ENCODE measurements at regions of chr6 and their contacts with region 1.

Region 1: DNA sequence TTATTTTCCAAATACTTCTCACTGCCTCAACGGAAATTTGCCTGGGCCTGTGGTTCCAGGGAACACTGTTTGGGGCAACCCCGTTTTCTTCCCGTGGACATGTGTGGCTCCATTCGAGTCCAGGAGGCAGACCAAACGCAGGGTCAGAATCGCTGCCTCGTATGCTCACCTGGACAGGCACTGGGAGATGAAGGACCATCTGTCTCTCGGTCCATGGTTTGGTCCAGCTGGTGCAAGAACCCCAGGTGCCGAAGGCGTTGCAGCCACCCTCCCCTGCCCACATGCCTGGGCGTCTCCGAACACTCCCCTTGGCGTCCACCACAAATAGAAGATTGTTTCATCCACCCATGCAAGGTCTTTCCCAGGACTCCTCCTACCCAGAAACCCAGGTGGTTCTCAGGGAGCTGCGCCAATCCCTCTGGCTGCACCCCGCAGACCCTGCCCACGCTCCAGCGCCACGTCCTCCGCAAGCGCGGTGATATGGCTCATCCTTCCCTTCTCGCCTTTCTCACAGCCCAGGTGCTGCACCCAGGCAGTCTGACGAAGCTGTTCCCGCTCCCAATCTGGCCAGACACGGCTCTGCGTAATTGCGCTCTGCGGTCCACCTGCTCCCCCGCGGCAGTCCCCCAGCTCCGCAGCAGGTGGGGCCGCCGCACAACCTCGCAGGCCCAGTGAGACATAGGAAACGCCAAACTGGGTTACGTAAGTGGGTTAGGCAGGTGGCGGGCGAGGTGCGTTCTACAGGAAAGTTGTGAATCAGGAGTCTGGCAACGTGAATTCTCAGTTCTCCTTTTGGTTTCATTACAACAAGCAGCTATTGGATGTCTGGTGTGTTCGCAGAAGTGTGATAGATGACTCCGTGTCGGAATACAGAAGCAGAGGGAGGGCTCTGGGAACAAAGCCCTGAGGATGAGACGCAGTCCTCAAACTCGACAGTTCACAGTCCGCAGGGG is 146.2 kb upstream of the ECI2 start:
- DNase-seq: peak; percentile 60
- ATAC-seq: peak; percentile 97
- H3K4me3 Mint-ChIP-seq: peak overlapping the region; percentile 73
- H3K27ac Mint-ChIP-seq: peak overlapping the region; percentile 76
- H3K4me1 Mint-ChIP-seq: peaks cover 18% of the 10 kb centered on the region
- H3K27me3 Mint-ChIP-seq: peaks cover 26% of the 10 kb centered on the region
- CTCF ChIP-seq: no peak

Region 2: GRCh38 chr6:4153514-4153985 is 128.1 kb before region 1 on chr6:
- CTCF ChIA-PET with region 1: no interaction called
- POLR2A ChIA-PET with region 1: no interaction called
- intact Hi-C with region 1: no loop called
- DNase-seq: no peak
- ATAC-seq: peak; percentile 84
- H3K4me3 Mint-ChIP-seq: peak overlapping the region; percentile 74
- H3K27ac Mint-ChIP-seq: peak overlapping the region; percentile 91
- H3K4me1 Mint-ChIP-seq: peaks cover 34% of the 10 kb centered on the region
- H3K27me3 Mint-ChIP-seq: peaks cover 15% of the 10 kb centered on the region
- CTCF ChIP-seq: no peak

Region 3: GRCh38 chr6:4336778-4337442 is 55.3 kb after region 1 on chr6:
- CTCF ChIA-PET with region 1: no interaction called
- POLR2A ChIA-PET with region 1: interaction called, 3 read pairs
- intact Hi-C with region 1: loop called (anchors 5 kb)
- DNase-seq: no peak
- ATAC-seq: peak; percentile 66
- H3K4me3 Mint-ChIP-seq: no peak overlapping the region
- H3K27ac Mint-ChIP-seq: peak overlapping the region; percentile 30
- H3K4me1 Mint-ChIP-seq: peaks cover 17% of the 10 kb centered on the region
- H3K27me3 Mint-ChIP-seq: no peaks in the 10 kb centered on the region
- CTCF ChIP-seq: no peak

Region 4: DNA sequence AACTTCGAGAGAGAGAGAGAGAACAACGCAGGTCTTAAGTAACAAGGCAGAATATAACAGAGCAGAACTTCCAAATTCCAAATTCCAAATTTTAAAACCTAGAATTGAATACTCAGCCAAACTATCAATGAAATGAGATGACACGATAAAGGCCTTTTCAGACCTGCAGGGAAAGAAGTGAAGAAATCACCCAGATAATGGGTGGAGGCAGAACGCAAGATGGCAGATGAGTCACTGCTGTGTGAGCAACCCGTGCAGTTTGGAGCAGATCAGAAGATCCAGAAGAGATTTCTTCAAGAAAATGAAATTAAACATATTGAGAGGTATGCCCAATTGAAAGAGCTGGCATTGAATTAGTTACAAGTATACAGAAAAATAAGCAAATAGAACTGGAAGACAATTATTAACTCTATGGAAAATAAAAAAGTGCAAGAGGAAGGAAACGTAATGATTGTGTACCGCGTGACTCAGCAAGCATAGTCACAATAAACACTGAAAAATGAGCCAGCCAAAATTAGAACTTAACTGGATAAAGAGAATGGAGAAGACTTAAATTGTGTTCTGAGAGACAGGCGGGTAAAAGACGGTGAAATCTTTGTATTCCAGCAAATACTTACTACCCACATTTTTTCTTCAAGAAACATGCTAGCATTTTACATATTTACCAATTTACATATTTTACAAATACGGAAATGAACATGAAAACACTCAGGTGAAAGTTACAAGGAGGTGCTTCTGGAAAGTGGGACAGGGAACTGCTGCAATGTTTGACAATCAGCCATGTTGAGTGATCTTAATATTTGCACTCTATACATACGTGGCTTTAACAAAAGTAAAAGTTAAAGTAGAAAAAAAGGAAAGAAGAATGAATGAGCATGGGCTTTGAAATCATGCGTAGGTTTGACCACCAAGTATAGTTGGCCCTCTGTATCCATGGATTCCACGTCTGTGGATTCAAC is 406.7 kb after region 1 on chr6:
- CTCF ChIA-PET with region 1: no interaction called
- POLR2A ChIA-PET with region 1: interaction called, 10 read pairs
- intact Hi-C with region 1: no loop called
- DNase-seq: no peak
- ATAC-seq: no peak
- H3K4me3 Mint-ChIP-seq: no peak overlapping the region
- H3K27ac Mint-ChIP-seq: no peak overlapping the region
- H3K4me1 Mint-ChIP-seq: peaks cover under 1% of the 10 kb centered on the region
- H3K27me3 Mint-ChIP-seq: peaks cover 13% of the 10 kb centered on the region
- CTCF ChIP-seq: no peak

Region 5: GRCh38 chr6:4848382-4849068 is 566.9 kb after region 1 on chr6:
- CTCF ChIA-PET with region 1: interaction called, 13 read pairs
- POLR2A ChIA-PET with region 1: no interaction called
- intact Hi-C with region 1: loop called (anchors 1 kb)
- DNase-seq: no peak
- ATAC-seq: no peak
- H3K4me3 Mint-ChIP-seq: no peak overlapping the region
- H3K27ac Mint-ChIP-seq: no peak overlapping the region
- H3K4me1 Mint-ChIP-seq: peaks cover 43% of the 10 kb centered on the region
- H3K27me3 Mint-ChIP-seq: no peaks in the 10 kb centered on the region
- CTCF ChIP-seq: no peak

Region 6: GRCh38 chr6:5003604-5004372 is 722.2 kb after region 1 on chr6 and contains the start of gene RPP40:
- CTCF ChIA-PET with region 1: no interaction called
- POLR2A ChIA-PET with region 1: no interaction called
- intact Hi-C with region 1: loop called (anchors 1 kb)
- DNase-seq: peak; percentile 98
- ATAC-seq: peak; percentile 94
- H3K4me3 Mint-ChIP-seq: peak within 1 kb of the TSS; percentile 94
- H3K27ac Mint-ChIP-seq: peak within 1 kb of the TSS; percentile 98
- H3K4me1 Mint-ChIP-seq: peaks cover 13% of the 10 kb centered on the region
- H3K27me3 Mint-ChIP-seq: no peaks in the 10 kb centered on the region
- CTCF ChIP-seq: no peak
- total RNA-seq, gene RPP40: 5.9 and 7.1 TPM in 2 replicates

Measured in activated B cell treated with CpG ODN at 0.5 μM for 24 hours (primary cell).